Panc1 (cell line): ENCODE measurements at regions of chr10 and their contacts with region 1.

Region 1: DNA sequence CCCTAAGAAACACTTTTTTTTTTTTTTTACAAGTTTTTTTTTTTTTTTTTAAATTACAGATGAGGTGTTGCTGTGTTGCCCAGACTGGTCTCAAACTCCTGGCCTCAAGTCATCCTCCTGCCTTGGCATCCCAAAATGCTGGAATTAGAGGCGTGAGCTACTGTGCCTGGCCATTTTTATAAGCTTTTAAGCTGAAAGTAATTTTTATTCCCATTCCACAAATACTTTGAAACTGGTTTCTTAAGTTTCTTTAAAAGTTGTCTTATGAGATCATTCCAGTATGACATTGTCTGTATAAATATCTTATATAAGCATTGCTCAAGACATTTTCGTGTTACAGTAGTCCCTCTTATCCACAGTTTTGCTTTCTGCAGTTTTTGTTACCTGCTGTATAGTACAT is 61.4 kb upstream of the CYP26C1 start:
- DNase-seq: no peak
- ATAC-seq: no peak
- H3K4me3 ChIP-seq: no peak overlapping the region
- H3K27ac ChIP-seq: no peak overlapping the region
- H3K4me1 ChIP-seq: no peaks in the 10 kb centered on the region
- H3K27me3 ChIP-seq: no peaks in the 10 kb centered on the region
- CTCF ChIP-seq: no peak

Region 2: DNA sequence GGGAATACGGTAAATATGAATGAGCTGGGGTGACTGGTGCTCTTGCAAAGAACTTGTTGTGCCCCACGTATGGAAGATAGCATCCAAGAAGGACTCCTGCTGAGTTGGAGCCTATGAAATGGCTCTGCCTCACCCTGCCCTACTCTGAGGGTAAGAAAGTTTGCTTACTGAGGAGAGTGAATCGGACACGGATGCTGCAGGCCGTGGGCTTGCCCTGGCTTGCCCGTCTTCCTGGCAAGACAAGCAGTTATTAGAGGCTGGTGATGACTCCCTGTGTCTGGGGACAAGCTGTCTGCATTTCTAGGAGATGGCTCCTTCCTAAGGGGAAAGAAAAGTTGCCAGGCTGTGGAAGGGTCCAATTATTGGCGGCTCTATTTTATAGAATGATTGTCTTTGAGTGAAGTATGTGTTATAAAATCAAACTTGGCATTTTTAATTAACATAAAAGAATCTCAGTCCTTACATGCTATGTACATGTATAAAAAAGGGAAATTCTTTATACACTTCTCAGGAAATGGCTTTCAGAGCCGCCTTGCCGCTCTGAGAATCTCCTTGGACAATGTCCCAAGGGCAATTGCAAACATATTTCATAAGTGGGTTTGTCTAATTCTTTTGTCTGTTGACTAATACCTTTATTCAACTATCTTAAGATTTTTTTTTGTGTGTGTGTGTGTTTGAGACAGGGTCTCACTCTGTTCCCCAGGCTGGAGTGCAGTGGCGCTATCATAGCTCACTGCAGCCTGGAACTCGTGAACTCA is 139.1 kb after region 1 on chr10:
- CTCF ChIA-PET with region 1: no interaction called
- POLR2A ChIA-PET with region 1: interaction called, 23 read pairs
- in situ Hi-C with region 1: no loop called
- intact Hi-C with region 1: no loop called
- DNase-seq: no peak
- ATAC-seq: no peak
- H3K4me3 ChIP-seq: no peak overlapping the region
- H3K27ac ChIP-seq: no peak overlapping the region
- H3K4me1 ChIP-seq: no peaks in the 10 kb centered on the region
- H3K27me3 ChIP-seq: 0 out of 2 replicates have a peak, but pooled peaks cover 2% of the 10 kb centered on the region
- CTCF ChIP-seq: no peak

Region 3: DNA sequence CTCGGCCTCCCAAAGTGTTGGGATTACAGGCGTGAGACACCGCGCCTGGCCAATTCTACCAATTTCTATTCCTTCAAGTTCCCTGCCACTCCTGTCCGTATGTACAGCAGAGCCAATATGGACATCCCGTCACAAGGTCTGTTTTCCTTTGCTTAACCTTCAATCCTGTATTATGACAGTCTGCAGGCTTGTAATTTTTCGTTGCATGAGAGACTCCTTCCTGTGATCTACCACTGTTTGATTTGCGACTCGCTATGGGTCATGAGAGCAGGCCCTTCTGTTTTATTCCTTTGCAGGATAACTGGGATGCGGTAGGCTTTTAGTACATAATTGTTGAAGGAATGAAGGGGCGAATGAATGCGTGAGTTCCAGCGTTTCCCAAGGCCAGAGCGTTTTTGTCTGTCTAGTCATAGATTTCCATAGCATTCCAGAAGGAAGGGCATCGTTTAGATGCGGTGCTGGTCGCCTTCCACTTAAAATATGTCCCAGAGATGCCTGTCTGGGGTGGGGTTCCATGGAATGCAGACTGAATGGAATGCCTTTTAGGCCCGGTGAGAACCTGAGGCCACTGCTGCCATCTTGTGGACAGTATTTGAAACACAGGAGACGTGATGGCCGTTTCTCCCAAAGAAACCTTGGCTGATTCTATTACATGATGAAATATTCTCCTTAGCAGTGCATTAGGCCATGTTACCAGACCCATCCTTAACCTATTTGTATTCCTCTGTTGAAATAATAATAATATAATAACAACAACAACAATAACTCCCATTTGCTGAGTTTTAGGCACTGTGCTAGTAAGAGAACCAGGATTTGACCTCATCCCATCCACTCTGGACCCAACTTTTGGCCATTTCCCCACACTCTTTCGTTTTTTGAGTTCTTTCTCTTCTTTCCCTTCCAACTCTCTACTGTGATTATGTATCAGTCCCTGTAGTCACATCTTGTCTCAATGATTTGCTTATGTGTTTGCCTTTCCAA is 289.8 kb after region 1 on chr10:
- CTCF ChIA-PET with region 1: no interaction called
- POLR2A ChIA-PET with region 1: no interaction called
- in situ Hi-C with region 1: no loop called
- intact Hi-C with region 1: no loop called
- DNase-seq: peak; percentile 60
- ATAC-seq: peak; percentile 85
- H3K4me3 ChIP-seq: no peak overlapping the region
- H3K27ac ChIP-seq: peak overlapping the region; percentile 73; the same call in 1 of the 2 replicates
- H3K4me1 ChIP-seq: 0 out of 2 replicates have a peak, but pooled peaks cover 9% of the 10 kb centered on the region
- H3K27me3 ChIP-seq: no peaks in the 10 kb centered on the region
- CTCF ChIP-seq: peak; percentile 92